Endothelial cell of umbilical vein (primary cell): ENCODE measurements at regions of chr3 and their contacts with region 1.

Region 1: GRCh38 chr3:52444860-52445793 is at the start of gene SEMA3G:
- DNase-seq: peak; percentile 69
- H3K4me3 ChIP-seq: peak within 1 kb of the TSS in 1 of 3 experiments; percentile 31
- H3K27ac ChIP-seq: no peak within 1 kb of the TSS
- H3K4me1 ChIP-seq: peaks cover 5% of the 10 kb centered on the region
- H3K27me3 ChIP-seq: no peaks in the 10 kb centered on the region
- CTCF ChIP-seq: peak; percentile 50 to 81
- POLR2A ChIP-seq: peak; percentile 47
- total RNA-seq, gene SEMA3G: 22.6 and 24.6 TPM in 2 replicates

Region 2: DNA sequence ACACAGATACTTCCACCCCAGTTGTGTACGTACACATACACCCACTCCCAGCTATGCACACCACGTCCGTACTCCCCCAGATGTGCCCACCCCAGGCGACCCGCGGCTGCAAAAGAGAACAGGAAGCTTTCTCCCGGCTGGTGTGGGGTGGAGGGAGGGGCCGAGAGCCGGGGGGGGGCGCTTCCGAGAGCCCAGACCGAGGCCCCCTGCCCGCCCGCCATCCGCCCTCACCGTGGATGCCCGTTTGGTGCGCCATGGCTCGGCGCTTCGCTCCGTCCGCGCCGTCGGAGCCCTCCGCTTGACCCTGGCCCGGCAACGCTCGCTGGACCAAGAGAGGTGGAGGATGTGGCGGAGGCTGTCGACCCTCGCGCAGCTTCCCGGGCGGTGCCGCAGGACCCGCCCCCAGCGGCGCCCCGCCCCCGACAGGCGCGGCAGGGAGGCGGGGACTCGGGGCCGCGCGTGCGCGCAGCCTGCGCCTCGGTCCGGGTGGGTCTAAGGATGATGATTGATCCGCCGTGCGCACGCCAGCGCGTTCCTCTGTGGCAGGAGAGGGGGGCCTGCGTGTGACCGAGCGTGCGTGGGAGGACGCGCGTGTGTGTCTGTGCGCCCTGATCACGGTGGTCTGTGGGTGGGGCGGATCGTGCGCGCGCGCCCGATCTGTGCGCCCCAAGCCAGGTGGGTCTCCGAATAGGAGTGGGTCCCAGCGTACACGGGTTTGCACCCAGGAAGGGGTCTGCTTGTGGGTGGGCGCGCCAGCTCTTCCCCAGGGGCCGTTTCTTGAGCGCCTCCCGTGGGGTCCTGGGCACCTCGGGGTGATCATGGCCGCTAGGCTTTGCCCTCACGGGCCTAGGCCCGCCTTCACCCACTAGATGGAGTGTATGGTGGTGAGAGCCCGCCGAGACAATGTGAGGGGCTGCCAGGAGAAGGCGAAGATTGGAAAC is 206.1 kb before region 1 on chr3 and contains the start of gene TWF2:
- CTCF ChIA-PET with region 1: interaction called, 3 read pairs
- POLR2A ChIA-PET with region 1: no interaction called
- dilution Hi-C with region 1: no loop called
- intact Hi-C with region 1: loop called (anchors 5 kb)
- DNase-seq: peak; percentile 82
- H3K4me3 ChIP-seq: peak within 1 kb of the TSS; percentile 20 to 98 (median 66)
- H3K27ac ChIP-seq: peak within 1 kb of the TSS; percentile 80
- H3K4me1 ChIP-seq: peaks cover 23% of the 10 kb centered on the region
- H3K27me3 ChIP-seq: no peaks in the 10 kb centered on the region
- CTCF ChIP-seq: peak; percentile 36 to 62
- POLR2A ChIP-seq: peak; percentile 87
- total RNA-seq, gene TWF2: 82.6 and 82.9 TPM in 2 replicates

Region 3: DNA sequence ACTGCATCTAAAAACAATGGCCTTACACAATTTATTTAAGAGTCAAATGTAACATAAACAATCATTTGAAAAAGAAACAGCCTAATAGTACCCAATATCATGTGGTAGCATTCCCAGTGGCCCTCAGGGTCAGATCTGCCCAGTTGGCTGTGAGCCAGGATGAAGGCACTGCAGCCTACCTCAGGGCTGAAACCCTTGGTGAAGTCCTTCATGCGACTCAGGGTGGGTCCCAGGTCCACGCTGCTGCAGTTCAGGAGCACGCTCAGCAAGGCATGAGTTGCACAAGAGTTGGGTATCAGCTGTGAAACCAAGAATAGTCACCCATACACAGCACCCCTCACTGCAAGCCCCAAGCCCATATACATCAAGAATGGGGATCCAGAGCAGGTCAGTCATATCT is 37.3 kb before region 1 on chr3:
- CTCF ChIA-PET with region 1: interaction called, 145 read pairs
- POLR2A ChIA-PET with region 1: interaction called, 3 read pairs
- dilution Hi-C with region 1: no loop called
- intact Hi-C with region 1: loop called (anchors 1 kb)
- DNase-seq: no peak
- H3K4me3 ChIP-seq: no peak overlapping the region
- H3K27ac ChIP-seq: no peak overlapping the region
- H3K4me1 ChIP-seq: peaks cover 20% of the 10 kb centered on the region
- H3K27me3 ChIP-seq: no peaks in the 10 kb centered on the region
- CTCF ChIP-seq: no peak
- POLR2A ChIP-seq: no peak

Region 4: DNA sequence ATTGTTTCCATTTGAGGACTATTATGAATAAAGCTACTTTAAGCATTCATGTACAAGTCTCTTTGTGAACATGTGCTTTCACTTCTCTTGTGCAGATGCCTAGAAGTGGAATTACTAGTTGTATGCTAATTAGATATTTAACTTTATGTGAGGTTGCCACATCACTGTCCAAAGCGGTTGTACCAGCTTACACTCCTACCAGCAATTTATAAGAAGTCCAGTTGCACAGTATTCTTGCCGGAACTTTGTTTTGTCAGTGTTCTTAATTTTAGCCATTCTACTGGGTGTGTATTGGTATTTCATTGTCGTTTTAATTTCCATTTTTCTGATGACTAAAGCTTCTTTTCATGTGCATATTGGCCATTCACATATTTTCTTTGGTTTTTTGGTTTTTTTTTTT is 29.3 kb before region 1 on chr3:
- CTCF ChIA-PET with region 1: interaction called, 243 read pairs
- POLR2A ChIA-PET with region 1: interaction called, 3 read pairs
- dilution Hi-C with region 1: no loop called
- intact Hi-C with region 1: loop called (anchors 1 kb)
- DNase-seq: no peak
- H3K4me3 ChIP-seq: no peak overlapping the region
- H3K27ac ChIP-seq: no peak overlapping the region
- H3K4me1 ChIP-seq: peaks cover 12% of the 10 kb centered on the region
- H3K27me3 ChIP-seq: no peaks in the 10 kb centered on the region
- CTCF ChIP-seq: no peak
- POLR2A ChIP-seq: no peak

Region 5: DNA sequence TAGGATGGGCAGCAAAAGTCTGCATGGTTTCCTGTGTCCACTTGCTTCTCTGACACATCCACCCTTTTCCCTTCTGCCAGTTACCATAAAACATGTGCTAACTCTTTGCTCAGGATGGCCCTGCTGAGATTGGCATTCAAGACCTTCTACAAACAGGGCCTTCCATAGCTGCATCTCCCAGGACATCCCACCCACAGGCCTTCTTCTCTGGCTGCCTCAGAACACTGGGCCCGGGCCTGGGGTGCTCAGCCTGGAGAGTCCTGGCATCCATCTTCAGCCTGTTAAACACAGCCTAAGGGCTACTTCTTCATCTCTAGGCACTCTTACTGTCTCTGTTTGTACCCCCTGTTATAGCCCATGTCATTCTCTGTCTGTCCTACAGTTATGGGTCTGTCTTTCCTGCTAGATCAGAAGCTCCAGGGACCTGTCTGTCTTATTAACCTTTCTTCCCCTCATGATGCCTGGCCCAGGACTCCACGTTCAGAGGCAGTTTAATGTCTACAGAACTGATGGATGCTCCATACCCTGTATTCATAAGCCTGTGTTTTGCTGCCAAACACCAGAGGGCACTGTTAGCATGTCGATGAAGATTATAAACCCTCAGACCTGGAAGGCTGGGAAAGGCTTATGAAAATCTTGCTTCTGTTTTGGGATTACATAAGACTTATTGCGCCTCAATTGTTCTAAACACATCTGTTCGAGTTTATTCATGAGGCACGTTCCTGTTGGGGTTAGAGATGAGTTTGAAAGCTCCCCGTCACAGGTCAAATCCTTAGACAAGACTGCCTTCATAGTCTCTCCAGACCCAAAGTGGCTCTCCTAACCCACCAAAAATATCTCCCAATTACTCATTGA is 16.7 kb before region 1 on chr3:
- CTCF ChIA-PET with region 1: interaction called, 243 read pairs
- POLR2A ChIA-PET with region 1: interaction called, 4 read pairs
- dilution Hi-C with region 1: no loop called
- intact Hi-C with region 1: loop called (anchors 1 kb)
- DNase-seq: peak; percentile 85
- H3K4me3 ChIP-seq: no peak overlapping the region
- H3K27ac ChIP-seq: peak overlapping the region; percentile 96
- H3K4me1 ChIP-seq: peaks cover 25% of the 10 kb centered on the region
- H3K27me3 ChIP-seq: no peaks in the 10 kb centered on the region
- CTCF ChIP-seq: peak; percentile 70 to 79
- POLR2A ChIP-seq: no peak